Endothelial cell of umbilical vein (primary cell): ENCODE measurements at regions of chr9 and their contacts with region 1.

Region 1: GRCh38 chr9:86354011-86354817 is at the start of gene TUT7:
- DNase-seq: peak; percentile 95
- H3K4me3 ChIP-seq: peak within 1 kb of the TSS; percentile 83 to 94 (median 86)
- H3K27ac ChIP-seq: peak within 1 kb of the TSS; percentile 84
- H3K4me1 ChIP-seq: peaks cover 22% of the 10 kb centered on the region
- H3K27me3 ChIP-seq: peaks cover 0 to 3% of the 10 kb centered on the region in 2 experiments
- CTCF ChIP-seq: no peak
- POLR2A ChIP-seq: peak; percentile 82
- total RNA-seq, gene TUT7: 16.7 and 19.0 TPM in 2 replicates

Region 2: DNA sequence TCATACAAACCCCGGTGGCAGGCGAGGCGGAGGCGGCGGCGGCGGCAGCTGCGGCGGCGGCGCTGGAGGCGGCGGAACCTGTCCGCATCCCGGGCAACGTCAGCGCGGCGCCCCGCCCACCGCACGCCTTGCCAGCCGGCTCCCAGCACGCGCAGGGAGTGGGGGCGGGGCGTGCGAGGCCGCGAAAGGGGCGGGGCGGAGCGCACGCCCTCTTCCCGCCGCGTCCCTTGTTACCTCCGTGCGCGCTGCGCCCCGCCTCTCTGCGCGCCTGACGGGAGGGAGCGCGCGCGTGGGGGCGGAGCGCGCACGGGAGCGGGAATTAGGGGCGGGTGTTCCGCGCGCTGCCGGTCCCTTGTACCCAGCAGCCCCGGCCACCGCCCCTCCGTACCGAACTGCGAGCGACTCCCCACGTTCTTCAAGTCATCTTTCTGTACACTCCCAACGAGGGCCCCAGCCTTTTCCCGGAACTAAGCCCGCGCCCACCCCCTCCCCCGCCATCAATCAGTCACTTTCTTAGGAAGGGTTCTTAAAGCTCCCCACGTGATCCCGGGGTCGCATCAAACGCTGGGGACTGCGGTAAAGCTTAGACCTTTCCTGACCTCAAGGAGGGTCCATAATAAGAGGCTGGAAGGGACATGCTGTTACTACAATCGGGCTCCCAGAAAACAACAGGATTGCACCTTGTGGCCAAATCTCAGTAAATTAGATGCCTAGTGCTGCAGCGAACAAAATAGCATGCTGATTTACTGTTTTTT is 612.2 kb before region 1 on chr9 and contains the start of gene AGTPBP1:
- CTCF ChIA-PET with region 1: no interaction called
- POLR2A ChIA-PET with region 1: no interaction called
- dilution Hi-C with region 1: no loop called
- intact Hi-C with region 1: loop called (anchors 5 kb)
- DNase-seq: peak; percentile 90
- H3K4me3 ChIP-seq: peak within 1 kb of the TSS; percentile 93 to 98 (median 95)
- H3K27ac ChIP-seq: peak within 1 kb of the TSS; percentile 43
- H3K4me1 ChIP-seq: peaks cover 15% of the 10 kb centered on the region
- H3K27me3 ChIP-seq: peaks cover 11 to 17% of the 10 kb centered on the region in 2 experiments
- CTCF ChIP-seq: no peak
- POLR2A ChIP-seq: no peak
- total RNA-seq, gene AGTPBP1: 18.4 and 19.1 TPM in 2 replicates

Region 3: DNA sequence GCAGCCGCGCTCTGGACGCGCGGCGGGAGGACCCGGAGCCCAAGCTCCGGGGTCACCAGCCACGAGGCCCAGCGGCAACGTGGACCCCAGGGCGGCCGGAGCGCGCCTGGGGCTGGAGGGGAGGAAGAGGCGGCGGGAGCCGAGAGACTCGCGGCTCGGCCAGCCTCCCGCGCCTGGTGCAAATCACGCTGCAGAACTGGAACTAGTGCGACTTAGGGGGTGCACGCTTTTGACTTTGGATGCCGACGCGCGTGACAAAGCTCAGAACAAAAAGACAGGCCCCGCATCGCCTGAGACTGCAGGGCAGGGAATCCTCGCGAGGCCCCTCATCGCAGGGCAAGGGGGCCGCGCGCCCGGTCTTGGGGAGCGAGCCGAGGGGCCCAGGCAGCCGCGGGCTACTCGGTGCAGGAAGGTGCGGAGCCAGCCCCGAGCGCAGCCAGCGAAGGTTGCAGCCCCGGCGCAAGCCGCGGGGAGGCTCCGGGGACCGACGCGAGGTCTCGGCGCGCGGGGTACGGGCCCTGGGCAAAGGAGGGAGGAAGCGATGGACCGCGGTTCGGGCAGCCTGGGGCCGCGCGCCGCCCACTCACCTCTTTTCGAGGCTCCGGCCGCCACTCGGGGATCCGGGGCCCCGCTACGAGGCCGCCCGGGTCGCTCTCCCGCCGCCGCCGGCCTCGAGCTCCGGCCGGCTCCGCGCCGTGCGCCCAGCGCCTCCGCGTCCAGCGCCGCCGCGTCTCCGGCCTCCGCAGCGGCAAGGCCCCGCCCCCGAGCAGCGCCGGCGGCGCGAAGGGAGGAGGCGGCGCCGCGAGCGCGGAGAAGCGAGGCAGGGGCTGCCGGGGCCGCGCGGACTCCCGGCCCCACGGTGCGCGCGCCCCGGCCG is 255.2 kb before region 1 on chr9 and contains the start of gene GOLM1:
- CTCF ChIA-PET with region 1: no interaction called
- POLR2A ChIA-PET with region 1: no interaction called
- dilution Hi-C with region 1: no loop called
- intact Hi-C with region 1: loop called (anchors 1 kb)
- DNase-seq: peak; percentile 58
- H3K4me3 ChIP-seq: peak within 1 kb of the TSS; percentile 63 to 88 (median 69)
- H3K27ac ChIP-seq: peak within 1 kb of the TSS; percentile 65
- H3K4me1 ChIP-seq: peaks cover 20% of the 10 kb centered on the region
- H3K27me3 ChIP-seq: no peaks in the 10 kb centered on the region
- CTCF ChIP-seq: peak in 1 of 2 donors; percentile 26
- POLR2A ChIP-seq: peak; percentile 43
- total RNA-seq, gene GOLM1: 94.9 and 108 TPM in 2 replicates

Region 4: DNA sequence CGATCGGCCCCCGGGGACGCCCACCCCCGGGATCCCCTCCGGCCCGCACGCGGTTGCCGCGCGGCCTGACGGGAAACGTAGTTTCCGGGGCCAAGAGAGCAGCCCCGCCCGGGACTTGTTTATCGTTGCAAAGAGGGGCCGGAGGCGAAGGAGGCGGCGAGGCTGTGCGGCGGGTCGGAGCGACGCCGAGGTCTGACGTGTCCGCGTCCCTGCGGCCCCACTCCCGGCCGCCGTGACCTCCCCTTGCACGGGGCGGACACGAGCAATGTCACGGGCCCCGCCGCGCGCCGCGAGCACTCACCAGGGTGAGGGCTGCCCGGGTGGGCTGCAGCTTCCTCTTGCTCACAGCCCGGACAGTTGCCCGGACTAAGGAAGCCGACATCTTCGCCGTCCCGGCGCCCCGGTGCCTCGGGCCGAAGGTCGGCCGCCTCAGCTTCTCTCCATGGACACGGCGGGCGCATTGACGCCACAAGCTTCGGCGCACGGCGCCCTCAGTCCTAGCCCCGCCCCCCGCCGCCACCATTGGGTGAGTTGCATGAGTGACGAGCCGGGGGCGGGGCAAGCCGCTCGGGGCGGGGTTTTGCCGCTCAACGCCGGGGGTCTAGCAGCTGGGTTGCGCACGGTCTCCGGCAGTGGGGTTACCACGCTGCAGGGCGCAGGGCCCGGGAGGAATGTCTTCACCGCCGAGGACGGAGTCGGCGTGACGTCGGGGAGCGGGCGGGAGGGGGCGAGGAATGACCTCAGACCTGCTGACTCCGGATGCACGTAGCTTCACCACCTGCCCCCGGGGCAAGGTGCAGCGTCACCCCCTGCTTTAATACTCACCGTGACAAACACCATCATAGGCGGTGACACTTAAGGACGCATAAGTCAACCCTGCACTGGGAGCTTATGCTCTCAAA is 71.9 kb before region 1 on chr9 and contains the start of gene ISCA1:
- CTCF ChIA-PET with region 1: no interaction called
- POLR2A ChIA-PET with region 1: no interaction called
- dilution Hi-C with region 1: no loop called
- intact Hi-C with region 1: loop called (anchors 1 kb)
- DNase-seq: peak; percentile 90
- H3K4me3 ChIP-seq: peak within 1 kb of the TSS; percentile 47 to 84 (median 76)
- H3K27ac ChIP-seq: peak within 1 kb of the TSS; percentile 88
- H3K4me1 ChIP-seq: peaks cover 11% of the 10 kb centered on the region
- H3K27me3 ChIP-seq: no peaks in the 10 kb centered on the region
- CTCF ChIP-seq: no peak
- POLR2A ChIP-seq: peak; percentile 83
- total RNA-seq, gene ISCA1: 20.6 and 22.2 TPM in 2 replicates

Region 5: GRCh38 chr9:86948074-86948929 is 594.1 kb after region 1 on chr9:
- CTCF ChIA-PET with region 1: no interaction called
- POLR2A ChIA-PET with region 1: no interaction called
- dilution Hi-C with region 1: no loop called
- intact Hi-C with region 1: loop called (anchors 1 kb)
- DNase-seq: peak; percentile 61
- H3K4me3 ChIP-seq: peak overlapping the region in 2 of 3 experiments; percentile 30 to 69
- H3K27ac ChIP-seq: no peak overlapping the region
- H3K4me1 ChIP-seq: peaks cover 3% of the 10 kb centered on the region
- H3K27me3 ChIP-seq: peaks cover 12 to 20% of the 10 kb centered on the region in 2 experiments
- CTCF ChIP-seq: peak; percentile 58 to 84
- POLR2A ChIP-seq: no peak